ENCODE measurements at regions of chr6 and their contacts with region 1.

Region 1: GRCh38 chr6:112043032-112044007 is 10.6 kb upstream of the CCN6 start:
- DNase-seq: no peak
- H3K4me3 ChIP-seq: peak overlapping the region; percentile 61
- H3K27me3 ChIP-seq: no peaks in the 10 kb centered on the region
- CTCF ChIP-seq: peak; percentile 99

Region 2: GRCh38 chr6:112010328-112010727 is 33.0 kb before region 1 on chr6:
- CTCF ChIA-PET with region 1: interaction called, 52 read pairs
- POLR2A ChIA-PET with region 1: no interaction called
- DNase-seq: no peak
- H3K4me3 ChIP-seq: no peak overlapping the region
- H3K27me3 ChIP-seq: no peaks in the 10 kb centered on the region
- CTCF ChIP-seq: no peak

Region 3: GRCh38 chr6:112018619-112019416 is 24.5 kb before region 1 on chr6:
- CTCF ChIA-PET with region 1: interaction called, 52 read pairs
- POLR2A ChIA-PET with region 1: no interaction called
- DNase-seq: no peak
- H3K4me3 ChIP-seq: no peak overlapping the region
- H3K27me3 ChIP-seq: no peaks in the 10 kb centered on the region
- CTCF ChIP-seq: no peak

Region 4: DNA sequence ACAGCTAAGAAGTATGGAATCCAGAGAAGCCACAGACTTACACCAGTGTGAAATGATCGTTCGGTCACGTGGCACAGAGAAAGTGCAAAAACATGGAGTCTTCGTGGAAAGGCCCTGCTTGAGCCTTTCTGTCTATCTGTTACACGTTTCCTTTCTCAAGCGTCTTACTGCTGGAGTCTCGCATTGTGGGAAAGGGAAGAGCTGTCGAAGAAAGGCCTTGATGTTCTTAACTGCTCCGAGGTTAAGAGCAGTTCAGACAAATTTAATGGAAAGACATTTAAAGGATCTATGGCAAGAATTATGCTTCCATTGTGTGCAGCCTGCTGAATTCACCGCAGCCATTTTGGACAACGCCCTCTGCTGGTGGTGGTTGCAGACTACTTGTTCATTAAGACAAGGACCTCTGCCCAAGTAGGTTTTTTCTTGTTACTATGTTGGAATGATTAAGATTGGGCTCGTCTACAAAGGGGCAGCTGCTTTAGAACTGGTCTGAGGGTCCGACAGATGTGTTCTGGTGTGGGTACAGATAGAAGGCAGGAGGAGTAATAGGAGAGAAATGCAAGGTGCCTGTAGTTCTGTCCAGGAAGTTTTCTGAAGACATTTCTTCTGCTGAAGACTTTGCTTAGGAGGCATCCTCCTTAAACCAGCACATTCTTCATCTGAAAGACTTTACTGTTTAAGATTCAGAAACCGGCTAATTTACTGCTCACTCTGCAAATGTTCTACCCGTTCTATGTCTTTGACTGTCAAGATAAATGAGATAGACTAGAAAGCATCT is 14.1 kb before region 1 on chr6:
- CTCF ChIA-PET with region 1: interaction called, 41 read pairs
- POLR2A ChIA-PET with region 1: no interaction called
- DNase-seq: no peak
- H3K4me3 ChIP-seq: no peak overlapping the region
- H3K27me3 ChIP-seq: peaks cover 5% of the 10 kb centered on the region; the same call in 1 of the 2 replicates
- CTCF ChIP-seq: peak; percentile 59

Region 5: GRCh38 chr6:112061605-112062004 is 18.3 kb after region 1 on chr6:
- CTCF ChIA-PET with region 1: no interaction called
- POLR2A ChIA-PET with region 1: no interaction called
- DNase-seq: no peak
- H3K4me3 ChIP-seq: no peak overlapping the region
- H3K27me3 ChIP-seq: no peaks in the 10 kb centered on the region
- CTCF ChIP-seq: no peak